Activated B cell treated with CpG ODN at 0.5 μM for 24 hours (primary cell): ENCODE measurements at regions of chr9 and their contacts with region 1.

Region 1: DNA sequence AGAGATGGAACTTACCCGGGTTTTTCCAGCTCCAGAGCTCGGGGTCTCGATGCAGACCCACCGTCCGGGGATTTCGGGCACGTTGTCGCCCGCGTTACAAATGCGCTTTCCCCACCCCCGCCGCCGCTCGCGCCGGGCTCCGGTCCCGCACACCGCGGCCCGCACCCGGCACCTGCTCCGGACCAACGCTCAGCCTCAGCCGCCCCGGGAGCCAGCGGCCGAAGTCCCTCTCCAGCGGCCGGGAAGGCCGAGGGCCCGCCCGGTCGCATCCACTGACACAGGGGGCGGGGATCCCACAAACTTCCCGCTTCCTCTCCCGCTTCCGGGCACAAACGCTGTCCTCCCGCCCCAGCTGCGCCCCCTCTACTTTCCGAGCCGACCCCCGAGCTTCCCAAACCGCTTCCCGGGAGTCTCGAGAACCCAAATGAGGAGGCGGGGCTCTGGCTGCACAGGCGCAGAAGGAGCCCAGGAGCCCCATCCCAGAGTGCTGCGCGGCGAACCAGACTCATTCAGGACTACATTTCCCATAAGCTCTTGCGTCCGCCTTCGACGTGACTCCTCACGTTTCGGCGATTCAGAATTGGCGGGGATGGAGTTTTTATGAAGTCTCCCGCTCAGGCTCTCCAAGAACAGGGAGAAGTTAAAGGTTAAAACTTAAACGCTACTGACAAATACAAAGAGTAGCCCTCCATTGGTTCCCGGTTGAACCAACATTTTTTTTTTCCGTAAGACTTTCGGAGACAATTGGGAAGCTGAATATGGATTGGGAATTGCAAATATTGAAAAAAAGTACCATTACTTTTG is at the start of gene ZNF782:
- DNase-seq: peak; percentile 83
- ATAC-seq: peak; percentile 95
- H3K4me3 Mint-ChIP-seq: peak within 1 kb of the TSS; percentile 100
- H3K27ac Mint-ChIP-seq: peak within 1 kb of the TSS; percentile 98
- H3K4me1 Mint-ChIP-seq: peaks cover 40% of the 10 kb centered on the region
- H3K27me3 Mint-ChIP-seq: peaks cover 9% of the 10 kb centered on the region
- CTCF ChIP-seq: no peak
- total RNA-seq, gene ZNF782: 7.7 and 8.0 TPM in 2 replicates

Region 2: GRCh38 chr9:95317119-95317892 is 1537.0 kb before region 1 on chr9 and contains the start of gene FANCC:
- CTCF ChIA-PET with region 1: no interaction called
- POLR2A ChIA-PET with region 1: no interaction called
- intact Hi-C with region 1: loop called (anchors 10 kb)
- DNase-seq: peak; percentile 89
- ATAC-seq: peak; percentile 84
- H3K4me3 Mint-ChIP-seq: peak within 1 kb of the TSS; percentile 92
- H3K27ac Mint-ChIP-seq: peak within 1 kb of the TSS; percentile 91
- H3K4me1 Mint-ChIP-seq: peaks cover 15% of the 10 kb centered on the region
- H3K27me3 Mint-ChIP-seq: peaks cover 10% of the 10 kb centered on the region
- CTCF ChIP-seq: no peak
- total RNA-seq, gene FANCC: 10.4 and 11.4 TPM in 2 replicates

Region 3: DNA sequence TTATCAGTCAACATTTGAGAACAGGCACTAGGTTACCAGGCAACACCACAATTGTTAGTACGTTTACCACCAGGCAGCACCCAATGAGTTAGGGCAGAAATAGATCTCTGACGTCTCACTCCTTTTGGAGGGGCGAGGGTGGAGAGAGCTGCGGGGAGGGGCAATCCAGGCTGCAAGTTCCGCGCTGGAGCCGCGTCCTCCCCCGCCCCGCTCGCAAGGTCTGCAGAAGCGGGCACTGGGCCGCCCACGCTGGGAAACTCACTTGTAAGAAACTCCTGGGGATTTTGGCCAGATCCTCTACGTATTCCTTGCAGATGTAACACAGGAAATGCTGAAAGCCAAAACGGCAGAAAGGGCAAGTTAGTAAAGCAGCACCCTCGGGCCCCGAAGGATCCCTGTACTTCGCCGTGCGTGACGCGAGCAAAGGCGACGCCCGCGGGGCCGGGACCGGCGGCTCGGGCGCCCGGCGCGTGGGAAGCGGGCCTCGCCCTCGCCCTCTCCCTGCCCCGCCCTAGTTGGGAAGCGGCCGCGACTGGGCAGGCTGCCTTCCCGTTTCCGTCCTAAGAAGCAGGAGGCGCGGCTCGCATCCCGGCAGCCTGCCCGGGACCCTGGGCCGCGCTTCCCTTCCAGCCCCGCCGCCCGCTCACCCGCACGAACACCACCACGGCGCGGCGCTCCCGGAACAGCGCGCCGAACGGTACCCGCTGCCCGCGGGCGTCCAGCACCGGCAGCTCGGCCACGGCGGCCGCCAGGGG is 199.7 kb before region 1 on chr9:
- CTCF ChIA-PET with region 1: no interaction called
- POLR2A ChIA-PET with region 1: no interaction called
- intact Hi-C with region 1: no loop called
- DNase-seq: peak; percentile 58
- ATAC-seq: peak; percentile 64
- H3K4me3 Mint-ChIP-seq: peak overlapping the region; percentile 88
- H3K27ac Mint-ChIP-seq: peak overlapping the region; percentile 86
- H3K4me1 Mint-ChIP-seq: peaks cover 17% of the 10 kb centered on the region
- H3K27me3 Mint-ChIP-seq: no peaks in the 10 kb centered on the region
- CTCF ChIP-seq: no peak

Region 4: GRCh38 chr9:96686548-96687335 is 167.5 kb before region 1 on chr9:
- CTCF ChIA-PET with region 1: no interaction called
- POLR2A ChIA-PET with region 1: no interaction called
- intact Hi-C with region 1: loop called (anchors 2 kb)
- DNase-seq: peak; percentile 78
- ATAC-seq: peak; percentile 97
- H3K4me3 Mint-ChIP-seq: peak overlapping the region; percentile 89
- H3K27ac Mint-ChIP-seq: peak overlapping the region; percentile 79
- H3K4me1 Mint-ChIP-seq: peaks cover 10% of the 10 kb centered on the region
- H3K27me3 Mint-ChIP-seq: no peaks in the 10 kb centered on the region
- CTCF ChIP-seq: no peak

Region 5: DNA sequence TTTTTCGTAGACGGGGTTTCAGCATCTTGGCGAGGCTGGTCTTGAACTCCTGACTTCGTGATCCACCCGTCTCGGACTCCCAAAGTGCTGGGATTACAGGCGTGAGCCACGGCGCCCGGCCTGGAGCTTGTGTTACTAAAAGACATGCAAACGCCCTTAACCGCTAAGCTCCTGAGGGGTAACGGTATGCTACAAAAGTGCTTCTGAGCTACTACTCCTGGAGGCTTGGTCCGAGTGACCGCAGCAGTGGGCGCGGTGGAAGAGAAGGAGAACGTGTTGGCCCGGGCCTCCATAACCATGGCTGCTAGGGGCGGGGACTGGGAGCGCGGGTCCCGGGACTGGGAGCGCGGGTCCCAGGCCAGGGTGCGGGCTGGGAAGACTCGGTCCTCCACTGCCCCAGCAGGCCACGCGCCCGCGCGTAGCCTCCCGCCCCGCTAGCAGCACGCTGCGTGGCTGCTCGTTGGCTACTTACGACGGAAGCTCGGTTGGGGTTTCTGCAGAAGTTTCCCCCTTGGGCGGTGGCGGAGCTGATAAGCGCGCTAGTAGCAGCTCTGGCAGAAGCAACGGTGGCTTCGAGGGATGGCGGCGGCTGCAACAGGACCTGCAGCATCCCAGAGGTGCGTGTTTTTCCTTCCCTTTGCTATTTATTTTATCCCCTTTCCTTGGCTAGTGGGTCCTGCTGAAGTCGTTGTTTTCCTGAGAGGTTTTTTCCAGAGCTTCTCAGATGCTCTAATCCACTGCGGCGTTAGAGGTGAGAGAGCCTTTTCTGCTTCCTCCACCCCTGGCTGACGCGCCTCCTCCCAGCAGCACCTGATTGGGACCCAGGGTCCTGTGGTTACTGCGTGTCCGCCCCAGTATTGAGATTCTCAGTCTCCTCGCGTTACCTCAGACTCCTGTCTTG is 383.9 kb after region 1 on chr9:
- CTCF ChIA-PET with region 1: no interaction called
- POLR2A ChIA-PET with region 1: interaction called, 4 read pairs
- intact Hi-C with region 1: loop called (anchors 1 kb)
- DNase-seq: peak; percentile 62
- ATAC-seq: peak; percentile 92
- H3K4me3 Mint-ChIP-seq: peak overlapping the region; percentile 95
- H3K27ac Mint-ChIP-seq: peak overlapping the region; percentile 90
- H3K4me1 Mint-ChIP-seq: peaks cover 18% of the 10 kb centered on the region
- H3K27me3 Mint-ChIP-seq: peaks cover 2% of the 10 kb centered on the region
- CTCF ChIP-seq: no peak

Region 6: DNA sequence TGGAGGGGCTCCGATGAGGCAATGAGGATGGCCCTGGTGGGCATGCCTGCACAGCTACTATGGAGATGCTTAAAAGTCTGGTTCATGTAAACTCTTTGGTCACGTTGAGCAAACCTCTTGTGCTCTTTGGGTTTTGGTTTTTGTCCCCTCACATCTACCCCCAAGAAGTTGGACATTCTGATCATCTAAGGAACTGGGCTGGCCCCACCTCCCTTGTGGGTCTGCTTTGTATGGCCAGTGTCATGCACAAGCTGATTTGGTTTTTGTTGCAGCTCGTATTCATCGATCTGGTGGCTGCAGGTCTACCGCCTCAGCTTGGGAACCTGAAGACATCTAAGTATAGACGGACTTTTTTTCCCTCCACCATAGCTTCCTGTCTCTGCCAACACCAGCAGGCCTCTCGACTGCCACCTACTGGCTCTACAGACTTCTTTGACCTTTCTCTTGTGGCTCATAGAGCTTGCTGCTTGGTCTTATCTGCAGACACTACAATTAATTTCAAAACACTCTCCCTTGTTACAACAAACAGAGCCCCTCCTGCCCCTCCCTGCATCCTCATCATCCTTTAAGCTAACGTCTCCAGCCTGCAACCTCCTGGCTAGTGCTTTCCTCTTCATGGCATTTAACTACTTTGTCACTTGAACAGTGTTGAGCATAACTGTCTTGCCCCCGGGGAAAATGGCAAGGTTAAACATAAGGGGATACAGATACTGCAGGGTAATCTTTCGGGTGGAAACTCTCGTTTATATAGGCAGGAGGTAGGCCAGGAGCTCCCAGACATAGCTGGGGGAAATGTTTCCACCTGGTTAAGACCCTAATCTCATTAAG is 744.4 kb after region 1 on chr9:
- CTCF ChIA-PET with region 1: interaction called, 35 read pairs
- POLR2A ChIA-PET with region 1: interaction called, 3 read pairs
- intact Hi-C with region 1: loop called (anchors 1 kb)
- DNase-seq: no peak
- ATAC-seq: peak; percentile 98
- H3K4me3 Mint-ChIP-seq: peak overlapping the region; percentile 46
- H3K27ac Mint-ChIP-seq: peak overlapping the region; percentile 31
- H3K4me1 Mint-ChIP-seq: peaks cover 7% of the 10 kb centered on the region
- H3K27me3 Mint-ChIP-seq: no peaks in the 10 kb centered on the region
- CTCF ChIP-seq: no peak